Endothelial cell of umbilical vein (primary cell): ENCODE measurements at regions of chr7 and their contacts with region 1.

Region 1: DNA sequence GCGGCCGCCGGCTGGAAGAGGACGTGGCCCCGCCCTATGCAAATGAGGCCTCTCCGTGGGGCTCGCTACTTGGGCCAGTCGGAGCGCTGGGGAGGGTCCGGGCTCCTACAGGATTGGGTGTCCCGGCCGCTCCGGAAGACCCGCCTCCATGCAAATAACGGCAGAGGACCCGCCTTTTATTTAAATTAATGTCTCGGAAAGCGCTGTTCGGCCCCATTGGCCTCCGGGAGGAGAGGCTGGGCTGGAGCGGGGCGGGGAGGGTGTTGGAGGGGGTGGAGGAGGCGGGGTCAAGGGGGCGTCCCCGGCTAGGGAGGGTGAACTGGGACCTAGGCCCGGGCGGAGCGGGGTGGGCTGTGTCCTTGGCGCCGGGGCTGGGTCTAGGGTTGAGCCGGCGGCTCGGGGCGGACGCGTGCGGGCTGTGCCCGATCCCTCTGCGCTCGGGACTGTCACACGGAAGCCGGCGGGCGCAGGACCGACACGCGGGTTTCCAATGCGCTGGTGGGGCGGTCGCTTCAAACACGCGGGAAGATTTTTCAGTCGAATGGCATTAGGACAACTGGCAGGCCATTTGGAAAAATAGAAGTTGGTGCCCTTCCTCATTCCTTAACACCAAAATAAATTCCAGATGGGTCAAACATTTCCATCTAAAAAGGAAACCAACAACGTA is 344 bp upstream of the POLM start:
- DNase-seq: peak; percentile 98
- H3K4me3 ChIP-seq: peak overlapping the region; percentile 63 to 79 (median 72)
- H3K27ac ChIP-seq: peak overlapping the region; percentile 50
- H3K4me1 ChIP-seq: peaks cover 8% of the 10 kb centered on the region
- H3K27me3 ChIP-seq: no peaks in the 10 kb centered on the region
- CTCF ChIP-seq: no peak
- POLR2A ChIP-seq: peak; percentile 72

Region 2: GRCh38 chr7:44044315-44045225 is 38.1 kb before region 1 on chr7 and contains the start of gene DBNL:
- CTCF ChIA-PET with region 1: no interaction called
- POLR2A ChIA-PET with region 1: no interaction called
- dilution Hi-C with region 1: no loop called
- intact Hi-C with region 1: loop called (anchors 1 kb)
- DNase-seq: peak; percentile 81
- H3K4me3 ChIP-seq: peak within 1 kb of the TSS; percentile 69 to 75 (median 74)
- H3K27ac ChIP-seq: peak within 1 kb of the TSS; percentile 38
- H3K4me1 ChIP-seq: peaks cover 15% of the 10 kb centered on the region
- H3K27me3 ChIP-seq: no peaks in the 10 kb centered on the region
- CTCF ChIP-seq: no peak
- POLR2A ChIP-seq: peak; percentile 91
- total RNA-seq, gene DBNL: 92.1 and 94.0 TPM in 2 replicates

Region 3: DNA sequence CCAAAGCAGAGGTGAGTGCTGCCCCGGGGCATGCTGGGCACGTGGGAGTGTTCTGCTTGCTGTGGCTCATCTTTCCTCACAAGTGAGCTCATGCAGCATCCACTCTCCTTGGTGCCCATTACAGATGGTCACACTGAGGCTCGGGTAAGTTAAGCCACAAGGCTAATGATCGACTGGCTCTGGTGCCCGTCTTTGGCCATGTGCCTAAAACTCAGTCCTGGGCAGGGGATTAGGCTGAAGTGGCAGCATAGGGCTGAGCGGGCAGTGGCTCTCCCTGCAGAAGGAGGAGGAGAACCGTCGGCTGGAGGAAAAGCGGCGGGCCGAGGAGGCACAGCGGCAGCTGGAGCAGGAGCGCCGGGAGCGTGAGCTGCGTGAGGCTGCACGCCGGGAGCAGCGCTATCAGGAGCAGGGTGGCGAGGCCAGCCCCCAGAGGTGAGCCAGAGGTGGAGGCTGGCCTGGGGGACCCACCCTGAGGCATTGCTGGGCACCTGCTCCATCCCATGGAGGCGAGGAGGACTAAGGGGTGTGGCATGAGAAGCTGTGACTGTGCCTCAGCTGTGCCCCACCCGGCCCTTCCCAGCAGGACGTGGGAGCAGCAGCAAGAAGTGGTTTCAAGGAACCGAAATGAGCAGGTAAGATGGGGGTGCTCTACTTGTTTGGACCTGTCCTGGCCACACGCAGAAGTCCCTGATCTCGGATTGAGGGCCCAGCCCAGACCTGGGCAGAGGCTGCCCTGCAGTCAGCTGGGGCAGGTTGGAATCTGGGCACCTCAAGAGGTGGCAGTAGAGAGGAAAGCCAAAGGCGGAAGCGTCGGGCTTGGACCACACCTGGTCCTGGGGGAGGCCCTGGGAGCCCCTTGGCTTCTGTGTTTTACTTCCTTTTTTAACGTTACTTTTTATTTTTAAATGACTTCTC is 24.6 kb before region 1 on chr7:
- CTCF ChIA-PET with region 1: no interaction called
- POLR2A ChIA-PET with region 1: no interaction called
- dilution Hi-C with region 1: no loop called
- intact Hi-C with region 1: no loop called
- DNase-seq: no peak
- H3K4me3 ChIP-seq: no peak overlapping the region
- H3K27ac ChIP-seq: no peak overlapping the region
- H3K4me1 ChIP-seq: no peaks in the 10 kb centered on the region
- H3K27me3 ChIP-seq: no peaks in the 10 kb centered on the region
- CTCF ChIP-seq: no peak
- POLR2A ChIP-seq: no peak

Region 4: GRCh38 chr7:44103923-44104859 is 21.5 kb after region 1 on chr7 and contains the start of gene AEBP1:
- CTCF ChIA-PET with region 1: no interaction called
- POLR2A ChIA-PET with region 1: no interaction called
- dilution Hi-C with region 1: no loop called
- intact Hi-C with region 1: loop called (anchors 2 kb)
- DNase-seq: peak; percentile 17
- H3K4me3 ChIP-seq: peak within 1 kb of the TSS; percentile 9 to 76 (median 59)
- H3K27ac ChIP-seq: no peak within 1 kb of the TSS
- H3K4me1 ChIP-seq: peaks cover 3% of the 10 kb centered on the region
- H3K27me3 ChIP-seq: no peaks in the 10 kb centered on the region
- CTCF ChIP-seq: no peak
- POLR2A ChIP-seq: no peak
- total RNA-seq, gene AEBP1: 47.7 and 48.0 TPM in 2 replicates

Region 5: GRCh38 chr7:44123190-44124003 is 40.7 kb after region 1 on chr7 and contains the start of gene POLD2:
- CTCF ChIA-PET with region 1: interaction called, 4 read pairs
- POLR2A ChIA-PET with region 1: no interaction called
- dilution Hi-C with region 1: no loop called
- intact Hi-C with region 1: loop called (anchors 1 kb)
- DNase-seq: peak; percentile 98
- H3K4me3 ChIP-seq: peak within 1 kb of the TSS; percentile 69 to 84 (median 79)
- H3K27ac ChIP-seq: peak within 1 kb of the TSS; percentile 53
- H3K4me1 ChIP-seq: peaks cover 14% of the 10 kb centered on the region
- H3K27me3 ChIP-seq: peaks cover 0 to under 1% of the 10 kb centered on the region in 2 experiments
- CTCF ChIP-seq: no peak
- POLR2A ChIP-seq: peak; percentile 40
- total RNA-seq, gene POLD2: 96.5 and 106 TPM in 2 replicates

Region 6: DNA sequence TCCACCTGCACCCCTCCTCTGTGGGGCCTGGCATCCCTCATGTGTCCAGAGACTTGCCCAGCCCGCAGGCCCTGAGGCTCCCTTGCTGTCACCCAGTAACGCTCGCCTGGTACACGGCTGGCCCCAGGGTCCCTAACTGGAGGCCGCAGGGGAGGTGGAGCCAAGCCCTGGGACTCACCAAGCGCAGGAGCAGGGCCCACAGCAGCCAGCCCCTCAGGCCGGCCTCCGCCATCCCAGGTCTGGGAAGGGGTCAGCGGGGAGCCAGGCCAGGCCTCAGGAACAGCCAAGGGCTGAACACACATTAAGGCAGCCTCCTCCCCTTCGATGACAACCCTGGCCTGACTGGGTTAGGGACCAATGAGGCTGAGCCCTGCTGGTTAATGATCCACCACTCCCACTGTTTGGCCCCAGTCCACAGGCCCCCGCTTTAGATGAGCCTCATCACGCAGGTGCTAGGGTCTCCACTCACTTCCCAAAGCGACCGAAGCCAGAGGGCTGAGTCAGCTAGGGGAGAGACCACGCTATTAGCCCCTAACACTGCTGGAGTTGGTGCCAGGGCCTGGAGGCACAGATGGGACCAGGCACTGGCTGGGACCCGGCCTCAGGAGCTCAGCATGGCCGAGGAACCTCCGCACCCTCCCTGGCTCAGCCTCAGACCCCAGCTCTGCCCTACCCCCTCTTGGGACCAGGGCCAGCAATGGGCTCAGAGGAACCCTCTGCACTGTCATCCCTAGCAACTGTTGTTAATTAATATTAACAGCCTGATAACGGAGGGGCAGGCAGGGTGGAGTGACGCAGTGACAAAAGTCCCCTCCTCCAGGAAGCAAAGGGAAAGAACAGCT is 458.6 kb after region 1 on chr7 and contains the start of gene NPC1L1:
- CTCF ChIA-PET with region 1: no interaction called
- POLR2A ChIA-PET with region 1: no interaction called
- dilution Hi-C with region 1: no loop called
- intact Hi-C with region 1: no loop called
- DNase-seq: no peak
- H3K4me3 ChIP-seq: no peak within 1 kb of the TSS
- H3K27ac ChIP-seq: no peak within 1 kb of the TSS
- H3K4me1 ChIP-seq: no peaks in the 10 kb centered on the region
- H3K27me3 ChIP-seq: no peaks in the 10 kb centered on the region
- CTCF ChIP-seq: no peak
- POLR2A ChIP-seq: no peak
- total RNA-seq, gene NPC1L1: not detected in 2 replicates